ENCODE measurements at regions of chr1 and their contacts with region 1.

Region 1: GRCh38 chr1:31663622-31664452 is 19.2 kb upstream of the PEF1 start:
- DNase-seq: no peak
- H3K4me3 ChIP-seq: no peak overlapping the region
- CTCF ChIP-seq: peak; percentile 86

Region 2: DNA sequence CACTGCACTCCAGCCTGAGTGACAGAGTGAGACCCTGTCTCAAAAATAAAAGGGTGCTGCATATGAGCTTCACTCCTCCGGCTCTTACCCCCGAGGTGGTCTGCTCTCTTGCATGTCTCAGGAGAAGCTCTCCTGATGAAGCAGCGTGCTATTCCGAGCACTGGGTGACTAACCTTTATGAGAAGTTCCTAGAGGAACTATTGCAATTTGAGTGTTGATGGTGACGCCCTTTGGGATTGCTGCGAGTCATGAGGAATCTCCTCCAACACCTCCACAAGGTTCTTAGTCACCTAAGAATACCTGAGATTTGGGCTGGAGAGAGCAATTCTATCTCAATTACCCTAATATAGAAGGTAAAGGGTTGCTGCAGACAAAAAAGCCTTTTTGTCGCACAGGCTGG is 128.3 kb before region 1 on chr1:
- CTCF ChIA-PET with region 1: no interaction called
- POLR2A ChIA-PET with region 1: no interaction called
- DNase-seq: no peak
- H3K4me3 ChIP-seq: no peak overlapping the region
- CTCF ChIP-seq: no peak

Region 3: GRCh38 chr1:31548907-31549808 is 114.7 kb before region 1 on chr1:
- CTCF ChIA-PET with region 1: no interaction called
- POLR2A ChIA-PET with region 1: no interaction called
- DNase-seq: no peak
- H3K4me3 ChIP-seq: peak overlapping the region; percentile 31
- CTCF ChIP-seq: peak; percentile 84

Region 4: DNA sequence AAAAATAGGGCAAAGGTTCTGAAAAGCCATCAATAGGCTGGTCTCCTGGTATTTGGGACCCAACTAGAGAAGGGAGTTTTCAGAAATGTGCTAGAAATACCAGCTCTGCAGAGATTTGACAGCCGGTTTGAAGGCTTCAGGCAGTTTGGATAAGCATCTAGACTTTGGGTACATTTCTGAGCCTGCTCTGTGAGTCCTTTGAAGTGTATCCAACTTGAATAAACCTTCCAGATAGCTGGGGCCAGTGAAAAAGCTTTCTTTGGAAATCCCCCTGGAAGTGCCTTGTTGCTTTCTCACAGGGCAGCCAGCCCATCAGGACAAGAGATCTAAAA is 12.8 kb before region 1 on chr1:
- CTCF ChIA-PET with region 1: interaction called, 16 read pairs
- POLR2A ChIA-PET with region 1: interaction called, 4 read pairs
- DNase-seq: no peak
- H3K4me3 ChIP-seq: no peak overlapping the region
- CTCF ChIP-seq: no peak

Region 5: DNA sequence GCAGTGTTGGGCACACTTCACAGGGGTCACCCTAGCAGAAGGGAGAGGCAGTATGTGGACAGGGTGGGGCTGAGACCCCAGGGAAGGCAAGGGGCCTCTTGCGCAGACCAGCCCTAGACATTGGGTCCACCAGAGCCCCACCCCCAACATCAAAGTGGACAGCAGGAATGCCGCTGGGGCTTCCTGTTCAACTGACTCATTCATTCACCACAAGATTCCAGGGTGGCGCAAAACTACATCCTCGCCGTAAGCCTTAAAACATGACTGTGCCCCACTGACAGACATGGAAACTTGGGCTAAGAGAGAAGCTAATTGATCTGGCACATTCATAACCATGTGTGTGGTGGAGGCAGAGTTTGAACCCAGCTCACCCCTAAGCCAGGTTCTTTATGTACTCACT is 26.0 kb after region 1 on chr1:
- CTCF ChIA-PET with region 1: interaction called, 10 read pairs
- POLR2A ChIA-PET with region 1: interaction called, 3 read pairs
- DNase-seq: peak; percentile 86
- H3K4me3 ChIP-seq: no peak overlapping the region
- CTCF ChIP-seq: no peak

Region 6: DNA sequence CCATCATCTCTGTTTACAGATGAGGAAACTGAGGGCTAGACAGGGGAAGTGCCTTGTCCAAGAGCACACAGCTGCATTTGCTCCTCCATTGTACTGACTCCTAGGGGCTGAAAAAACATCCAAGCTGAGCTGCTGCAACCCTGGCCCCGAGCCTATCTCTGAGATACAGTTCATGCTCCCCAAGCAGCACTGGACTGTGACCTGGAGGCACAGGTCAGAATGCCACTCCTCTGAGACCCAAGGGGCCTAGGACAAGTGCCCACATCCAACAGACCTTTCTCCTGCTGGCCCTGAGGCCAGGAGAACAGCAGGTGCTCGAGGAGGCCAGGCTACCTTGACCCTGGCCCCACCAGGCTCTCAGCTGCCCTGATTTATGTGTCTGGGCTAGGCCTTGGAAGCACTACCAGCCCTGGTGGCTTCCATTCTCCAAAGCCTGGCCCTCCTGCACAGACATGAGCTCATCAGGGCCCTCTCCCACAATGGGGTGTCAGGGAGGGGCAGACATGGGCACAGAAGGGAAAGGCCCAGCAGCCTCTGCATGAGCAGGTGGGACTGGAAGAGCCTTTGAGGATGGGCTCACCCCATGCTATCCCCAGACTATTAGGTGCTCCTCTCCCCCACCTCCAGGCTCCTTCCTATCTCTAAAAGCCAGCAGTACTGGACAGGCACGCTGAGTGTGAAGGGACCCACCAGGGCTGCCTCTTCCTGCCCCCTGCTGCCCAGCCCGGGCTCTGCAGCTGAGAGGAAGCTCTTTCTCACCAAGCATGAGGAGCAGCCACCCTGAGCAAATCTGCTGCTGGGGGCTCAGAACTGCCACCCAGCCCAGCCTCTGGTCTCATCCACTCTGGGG is 81.5 kb after region 1 on chr1:
- CTCF ChIA-PET with region 1: interaction called, 107 read pairs
- POLR2A ChIA-PET with region 1: interaction called, 3 read pairs
- DNase-seq: no peak
- H3K4me3 ChIP-seq: no peak overlapping the region
- CTCF ChIP-seq: peak; percentile 92

Region 7: GRCh38 chr1:31789259-31790065 is 125.6 kb after region 1 on chr1:
- CTCF ChIA-PET with region 1: interaction called, 46 read pairs
- POLR2A ChIA-PET with region 1: interaction called, 6 read pairs
- DNase-seq: peak; percentile 49
- H3K4me3 ChIP-seq: peak overlapping the region; percentile 76
- CTCF ChIP-seq: peak; percentile 99

Measured in AG04449 (cell line).